ENCODE measurements at regions of chr9 and their contacts with region 1.

Region 1: GRCh38 chr9:77166193-77166592 is 11.1 kb upstream of the VPS13A start:
- DNase-seq: no peak
- H3K27ac ChIP-seq: no peak overlapping the region
- CTCF ChIP-seq: no peak

Region 2: DNA sequence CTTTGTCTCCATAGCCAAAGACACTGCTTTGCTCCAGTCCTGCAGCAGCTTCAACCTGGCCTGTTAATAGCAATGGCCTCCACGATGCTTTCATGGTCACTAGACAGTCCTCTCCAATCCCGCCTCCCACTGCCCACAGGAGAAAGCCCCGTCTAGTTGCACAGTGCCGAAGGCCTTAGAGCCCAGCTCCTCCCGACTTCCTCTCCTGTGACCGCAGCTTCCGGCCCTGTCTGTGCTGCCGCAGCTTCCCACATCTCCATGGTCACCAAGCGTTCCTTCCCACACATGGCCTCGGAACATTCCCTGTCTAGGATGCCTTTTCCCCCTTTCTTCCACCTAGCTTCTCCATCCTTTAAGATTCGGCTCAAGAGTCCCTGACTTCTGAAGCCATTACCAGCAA is 378.5 kb before region 1 on chr9:
- CTCF ChIA-PET with region 1: no interaction called
- POLR2A ChIA-PET with region 1: no interaction called
- DNase-seq: no peak
- H3K27ac ChIP-seq: no peak overlapping the region
- CTCF ChIP-seq: no peak

Region 3: GRCh38 chr9:76926324-76926731 is 239.9 kb before region 1 on chr9:
- CTCF ChIA-PET with region 1: no interaction called
- POLR2A ChIA-PET with region 1: no interaction called
- DNase-seq: no peak
- H3K27ac ChIP-seq: peak overlapping the region; percentile 53; the same call in 1 of the 2 replicates
- CTCF ChIP-seq: no peak

Region 4: DNA sequence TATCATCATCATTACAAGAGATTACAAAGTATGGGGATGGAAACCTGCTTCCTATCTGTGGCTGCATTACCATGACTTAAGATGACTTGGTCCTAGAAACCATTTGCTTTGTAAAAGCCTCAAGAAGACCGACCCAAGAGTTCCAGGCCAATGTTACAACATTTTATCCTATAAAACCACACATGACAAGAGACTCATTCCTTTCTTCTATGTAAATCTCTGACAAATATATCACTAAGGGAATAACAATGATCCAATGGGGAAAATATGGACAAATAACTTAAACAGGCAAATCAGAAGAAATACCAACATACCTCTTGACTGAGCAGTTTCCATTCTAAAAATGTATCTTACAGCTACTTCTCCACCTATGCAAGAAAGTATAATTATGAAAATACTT is 33.2 kb before region 1 on chr9:
- CTCF ChIA-PET with region 1: no interaction called
- POLR2A ChIA-PET with region 1: no interaction called
- DNase-seq: no peak
- H3K27ac ChIP-seq: no peak overlapping the region
- CTCF ChIP-seq: no peak

Region 5: GRCh38 chr9:77177161-77177893 is 11.1 kb after region 1 on chr9 and contains the start of gene VPS13A:
- CTCF ChIA-PET with region 1: interaction called, 16 read pairs
- POLR2A ChIA-PET with region 1: no interaction called
- DNase-seq: peak; percentile 88
- H3K27ac ChIP-seq: peak within 1 kb of the TSS; percentile 86
- CTCF ChIP-seq: peak; percentile 48